ENCODE measurements at regions of chr2 and their contacts with region 1.

Region 1: DNA sequence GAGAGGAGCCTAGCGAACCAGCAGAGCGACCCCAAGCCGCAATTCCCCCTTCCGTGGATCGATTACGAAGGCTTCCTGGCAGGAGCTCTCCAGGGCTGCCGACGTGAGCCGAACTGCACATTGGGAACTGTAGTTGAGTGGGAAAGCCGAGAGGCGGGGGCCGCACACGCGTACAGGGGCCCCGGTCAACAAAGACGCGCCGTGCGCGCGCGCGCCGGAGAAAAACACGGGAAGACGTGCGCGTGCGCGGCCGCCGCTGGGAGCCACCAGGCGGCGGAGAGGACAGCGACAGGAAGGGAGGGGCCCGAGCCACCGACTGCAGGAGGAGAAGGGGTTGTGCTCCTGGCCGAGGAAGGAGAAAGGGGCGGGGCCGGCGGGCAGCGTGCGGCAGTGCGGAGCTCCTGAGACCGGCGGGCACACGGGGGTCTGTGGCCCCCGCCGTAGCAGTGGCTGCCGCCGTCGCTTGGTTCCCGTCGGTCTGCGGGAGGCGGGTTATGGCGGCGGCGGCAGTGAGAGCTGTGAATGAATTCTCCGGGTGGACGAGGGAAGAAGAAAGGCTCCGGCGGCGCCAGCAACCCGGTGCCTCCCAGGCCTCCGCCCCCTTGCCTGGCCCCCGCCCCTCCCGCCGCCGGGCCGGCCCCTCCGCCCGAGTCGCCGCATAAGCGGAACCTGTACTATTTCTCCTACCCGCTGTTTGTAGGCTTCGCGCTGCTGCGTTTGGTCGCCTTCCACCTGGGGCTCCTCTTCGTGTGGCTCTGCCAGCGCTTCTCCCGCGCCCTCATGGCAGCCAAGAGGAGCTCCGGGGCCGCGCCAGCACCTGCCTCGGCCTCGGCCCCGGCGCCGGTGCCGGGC is at the start of gene SPAST:
- DNase-seq: peak; percentile 98
- ATAC-seq: peak; percentile 95
- H3K4me3 Mint-ChIP-seq: peak within 1 kb of the TSS; percentile 88
- H3K27ac Mint-ChIP-seq: peak within 1 kb of the TSS; percentile 90
- H3K4me1 Mint-ChIP-seq: peaks cover 20% of the 10 kb centered on the region
- H3K27me3 Mint-ChIP-seq: no peaks in the 10 kb centered on the region
- CTCF ChIP-seq: peak; percentile 50
- total RNA-seq, gene SPAST: 13.5 to 14.1 TPM

Region 2: GRCh38 chr2:32039447-32040219 is 23.9 kb before region 1 on chr2 and contains the start of gene DPY30:
- CTCF ChIA-PET with region 1: interaction called, 6 read pairs
- POLR2A ChIA-PET with region 1: interaction called, 20 read pairs
- intact Hi-C with region 1: no loop called
- DNase-seq: peak; percentile 93
- ATAC-seq: peak; percentile 96
- H3K4me3 Mint-ChIP-seq: peak within 1 kb of the TSS; percentile 90
- H3K27ac Mint-ChIP-seq: peak within 1 kb of the TSS; percentile 89
- H3K4me1 Mint-ChIP-seq: peaks cover 11% of the 10 kb centered on the region
- H3K27me3 Mint-ChIP-seq: no peaks in the 10 kb centered on the region
- CTCF ChIP-seq: no peak
- total RNA-seq, gene DPY30: 68.5 to 68.8 TPM